GM12878 (cell line): ENCODE measurements at regions of chr17 and their contacts with region 1.

Region 1: DNA sequence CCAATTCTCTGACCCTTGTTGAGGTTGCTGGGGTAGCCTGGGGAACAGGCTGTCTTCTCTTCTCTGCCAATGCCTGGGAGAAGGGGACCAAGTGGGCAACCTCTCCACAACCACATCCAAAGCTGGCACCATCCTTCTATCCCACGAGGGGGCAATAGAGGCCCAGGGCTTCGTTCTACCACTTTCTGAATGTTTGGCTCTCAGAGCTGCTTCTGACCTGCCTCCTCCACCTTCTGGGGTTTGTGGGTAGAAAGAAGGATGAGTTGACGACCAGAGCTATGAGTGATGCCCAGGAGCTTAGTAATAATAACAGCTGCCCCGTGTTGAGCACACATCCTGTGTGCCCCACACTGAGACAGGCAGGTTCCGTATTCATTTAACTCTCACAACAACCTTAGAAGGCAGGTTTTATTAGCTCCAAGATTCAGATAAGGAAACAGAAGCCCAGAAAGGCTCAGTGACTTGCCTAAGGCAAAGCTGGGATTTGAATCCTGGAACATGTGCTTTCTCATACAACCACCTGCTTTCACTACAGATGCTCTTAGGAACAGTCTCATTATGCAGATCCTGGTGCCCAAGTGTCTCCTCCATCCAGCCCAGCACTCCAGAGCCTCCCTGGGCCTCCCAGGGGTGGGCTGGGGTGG is 11.1 kb downstream of the TSPOAP1 start:
- DNase-seq: peak; percentile 66
- ATAC-seq: peak; percentile 95
- H3K4me3 ChIP-seq: no peak overlapping the region
- H3K27ac ChIP-seq: peak overlapping the region; percentile 50
- H3K4me1 ChIP-seq: peaks cover 7% of the 10 kb centered on the region
- H3K27me3 ChIP-seq: no peaks in the 10 kb centered on the region
- CTCF ChIP-seq: peak; percentile 78 to 91 (median 87)
- EP300 ChIP-seq: no peak
- POLR2A ChIP-seq: peak; percentile 22; the same call in 1 of the 2 replicates
- RAD21 ChIP-seq: peak; percentile 93

Region 2: DNA sequence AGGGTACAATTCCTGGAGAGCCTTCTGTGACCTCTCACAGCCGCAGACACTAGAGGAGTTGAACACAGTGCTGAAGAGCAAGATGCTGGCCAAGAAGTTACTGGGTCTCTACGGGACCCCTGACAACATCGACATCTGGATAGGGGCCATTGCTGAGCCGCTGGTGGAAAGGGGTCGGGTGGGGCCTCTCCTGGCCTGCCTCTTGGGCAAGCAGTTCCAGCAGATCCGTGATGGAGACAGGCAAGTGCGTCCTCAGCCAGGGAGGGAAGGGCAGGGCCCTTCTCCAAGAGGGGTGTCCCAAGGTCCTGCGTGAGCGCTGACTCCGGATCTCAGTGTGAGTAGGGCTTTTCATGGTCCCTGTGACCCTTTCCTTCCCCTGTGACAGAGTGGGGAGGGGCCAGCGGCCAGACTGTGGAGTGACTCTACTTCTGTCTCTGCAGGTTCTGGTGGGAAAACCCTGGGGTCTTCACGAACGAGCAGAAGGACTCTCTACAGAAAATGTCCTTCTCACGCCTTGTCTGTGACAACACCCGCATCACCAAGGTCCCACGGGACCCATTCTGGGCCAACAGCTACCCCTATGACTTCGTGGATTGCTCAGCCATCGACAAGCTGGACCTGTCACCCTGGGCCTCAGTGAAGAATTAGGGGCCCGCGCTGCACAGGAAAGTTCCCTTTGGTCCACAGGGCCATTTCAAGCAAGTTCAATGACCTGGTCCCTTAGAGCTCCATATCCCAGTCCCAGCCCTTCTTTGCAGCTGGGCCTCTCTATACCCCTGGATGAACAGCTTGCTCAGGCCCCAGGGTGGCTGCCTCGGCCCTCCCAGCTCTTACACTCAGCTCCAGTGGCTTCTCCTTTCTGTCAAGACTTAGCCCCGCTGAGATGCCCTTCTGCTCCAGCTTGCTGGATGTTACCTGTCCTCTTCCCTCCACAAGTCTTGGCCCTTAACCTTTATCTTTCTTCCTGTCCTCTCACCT is 49.9 kb before region 1 on chr17:
- CTCF ChIA-PET with region 1: no interaction called
- POLR2A ChIA-PET with region 1: no interaction called
- RAD21 ChIA-PET with region 1: no interaction called
- SMC1A ChIA-PET with region 1: no interaction called
- in situ Hi-C with region 1: no loop called
- intact Hi-C with region 1: no loop called
- DNase-seq: no peak
- ATAC-seq: no peak
- H3K4me3 ChIP-seq: no peak overlapping the region
- H3K27ac ChIP-seq: no peak overlapping the region
- H3K4me1 ChIP-seq: no peaks in the 10 kb centered on the region
- H3K27me3 ChIP-seq: peaks cover 2 to 4% of the 10 kb centered on the region in 2 experiments; a peak in 2 of 4 replicates
- CTCF ChIP-seq: no peak
- EP300 ChIP-seq: no peak
- POLR2A ChIP-seq: no peak
- RAD21 ChIP-seq: no peak

Region 3: DNA sequence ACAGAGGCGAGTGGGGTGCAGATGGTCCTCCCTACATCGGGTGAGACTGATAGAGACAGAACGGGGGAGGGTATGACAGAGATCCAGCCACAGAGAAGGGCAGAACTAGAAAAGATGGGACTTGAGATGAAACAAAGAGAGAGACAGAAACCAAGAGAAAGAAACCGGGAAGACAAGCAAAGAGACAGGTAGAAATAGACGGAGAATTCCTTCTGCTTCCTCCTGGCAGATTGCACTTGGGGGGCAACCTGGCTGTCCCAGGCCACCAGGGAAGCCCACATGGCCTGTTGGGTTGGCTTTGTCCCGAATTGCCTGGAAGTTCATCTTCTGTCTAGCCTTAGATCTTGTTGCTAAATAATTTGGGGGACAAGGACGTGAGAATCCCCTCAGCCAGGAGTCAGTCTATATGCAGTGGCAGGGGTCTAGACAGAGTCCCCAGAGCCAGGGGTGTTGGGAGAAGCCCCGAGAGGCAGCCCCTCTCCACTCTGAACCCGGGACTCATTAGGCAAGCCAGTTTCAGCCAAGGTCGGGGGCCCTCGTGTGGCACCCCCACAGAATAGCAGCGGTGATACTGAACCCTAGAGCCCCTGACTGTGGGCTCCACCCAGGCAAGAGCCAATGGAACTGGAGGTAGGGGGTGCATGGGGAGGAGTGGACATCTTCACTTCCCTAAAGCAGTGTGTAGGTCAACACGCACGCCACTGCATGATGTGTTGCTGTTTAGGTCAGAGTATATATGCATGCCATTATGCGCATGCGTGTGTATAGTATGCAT is 11.7 kb after region 1 on chr17:
- CTCF ChIA-PET with region 1: interaction called, 32 read pairs
- POLR2A ChIA-PET with region 1: interaction called, 5 read pairs
- RAD21 ChIA-PET with region 1: interaction called, 16 read pairs
- SMC1A ChIA-PET with region 1: interaction called, 16 read pairs
- in situ Hi-C with region 1: no loop called
- intact Hi-C with region 1: no loop called
- DNase-seq: peak; percentile 97
- ATAC-seq: peak; percentile 51
- H3K4me3 ChIP-seq: peak overlapping the region; percentile 56; the same call in 1 of the 2 replicates
- H3K27ac ChIP-seq: peak overlapping the region; percentile 60
- H3K4me1 ChIP-seq: peaks cover 22% of the 10 kb centered on the region
- H3K27me3 ChIP-seq: no peaks in the 10 kb centered on the region; a peak in 1 of 4 replicates
- CTCF ChIP-seq: peak in 2 of 3 experiments; percentile 75 to 79; a peak in 4 of 6 replicates
- EP300 ChIP-seq: 0 out of 4 replicates have a peak, but pooled peaks of 1 of the 2 experiments have one; percentile 7
- POLR2A ChIP-seq: no peak
- RAD21 ChIP-seq: peak; percentile 44

Region 4: DNA sequence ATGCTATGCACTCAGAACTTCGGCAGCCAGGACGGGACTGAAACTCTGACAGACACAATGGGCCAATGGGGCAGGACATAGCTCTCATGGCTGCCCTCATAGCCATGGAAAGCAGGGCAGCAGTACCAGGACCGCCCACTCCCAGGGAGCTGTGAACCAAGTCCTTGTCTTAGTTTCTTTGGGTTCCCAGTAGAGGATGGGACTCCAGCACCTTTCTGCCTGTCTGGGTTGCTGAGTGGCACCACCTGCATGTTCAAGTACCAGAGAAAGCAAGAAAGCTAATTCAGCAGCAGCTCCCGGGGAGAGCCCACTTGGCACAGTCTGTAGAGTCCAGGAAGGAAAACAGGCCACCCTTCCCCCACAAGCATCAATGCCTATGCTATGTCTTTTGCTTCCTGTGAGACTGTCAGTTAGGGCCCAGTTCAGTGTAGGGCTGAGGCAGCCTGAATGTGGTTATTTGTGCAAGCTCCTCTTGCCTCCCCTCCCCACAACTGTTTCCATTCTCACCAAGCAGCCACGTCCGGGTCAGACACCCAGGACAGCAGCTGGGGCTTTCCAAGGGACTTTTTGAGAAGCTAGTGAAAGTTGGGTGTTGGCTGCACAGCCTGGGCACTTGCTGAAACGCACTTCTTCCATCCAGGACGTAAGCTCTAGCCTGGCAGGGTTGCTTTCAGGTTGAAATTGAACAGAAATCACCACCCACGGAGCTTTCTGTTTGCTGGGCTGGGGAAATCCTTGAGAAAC is 26.7 kb after region 1 on chr17:
- CTCF ChIA-PET with region 1: interaction called, 163 read pairs
- POLR2A ChIA-PET with region 1: interaction called, 77 read pairs
- RAD21 ChIA-PET with region 1: interaction called, 227 read pairs
- SMC1A ChIA-PET with region 1: interaction called, 249 read pairs
- in situ Hi-C with region 1: no loop called
- intact Hi-C with region 1: loop called (anchors 1 kb)
- DNase-seq: peak; percentile 98
- ATAC-seq: peak; percentile 76
- H3K4me3 ChIP-seq: peak overlapping the region; percentile 81
- H3K27ac ChIP-seq: peak overlapping the region; percentile 100
- H3K4me1 ChIP-seq: peaks cover 53% of the 10 kb centered on the region
- H3K27me3 ChIP-seq: no peaks in the 10 kb centered on the region
- CTCF ChIP-seq: no peak
- EP300 ChIP-seq: peak; percentile 85 to 96
- POLR2A ChIP-seq: peak; percentile 79
- RAD21 ChIP-seq: peak; percentile 28; the same call in 1 of the 2 replicates

Region 5: GRCh38 chr17:58427807-58428206 is 110.3 kb after region 1 on chr17:
- CTCF ChIA-PET with region 1: interaction called, 23 read pairs
- POLR2A ChIA-PET with region 1: no interaction called
- RAD21 ChIA-PET with region 1: interaction called, 31 read pairs
- SMC1A ChIA-PET with region 1: interaction called, 21 read pairs
- in situ Hi-C with region 1: no loop called
- intact Hi-C with region 1: no loop called
- DNase-seq: no peak
- ATAC-seq: no peak
- H3K4me3 ChIP-seq: no peak overlapping the region
- H3K27ac ChIP-seq: no peak overlapping the region
- H3K4me1 ChIP-seq: no peaks in the 10 kb centered on the region; the same call in 1 of the 2 replicates
- H3K27me3 ChIP-seq: no peaks in the 10 kb centered on the region
- CTCF ChIP-seq: no peak
- EP300 ChIP-seq: no peak
- POLR2A ChIP-seq: no peak
- RAD21 ChIP-seq: no peak

Region 6: DNA sequence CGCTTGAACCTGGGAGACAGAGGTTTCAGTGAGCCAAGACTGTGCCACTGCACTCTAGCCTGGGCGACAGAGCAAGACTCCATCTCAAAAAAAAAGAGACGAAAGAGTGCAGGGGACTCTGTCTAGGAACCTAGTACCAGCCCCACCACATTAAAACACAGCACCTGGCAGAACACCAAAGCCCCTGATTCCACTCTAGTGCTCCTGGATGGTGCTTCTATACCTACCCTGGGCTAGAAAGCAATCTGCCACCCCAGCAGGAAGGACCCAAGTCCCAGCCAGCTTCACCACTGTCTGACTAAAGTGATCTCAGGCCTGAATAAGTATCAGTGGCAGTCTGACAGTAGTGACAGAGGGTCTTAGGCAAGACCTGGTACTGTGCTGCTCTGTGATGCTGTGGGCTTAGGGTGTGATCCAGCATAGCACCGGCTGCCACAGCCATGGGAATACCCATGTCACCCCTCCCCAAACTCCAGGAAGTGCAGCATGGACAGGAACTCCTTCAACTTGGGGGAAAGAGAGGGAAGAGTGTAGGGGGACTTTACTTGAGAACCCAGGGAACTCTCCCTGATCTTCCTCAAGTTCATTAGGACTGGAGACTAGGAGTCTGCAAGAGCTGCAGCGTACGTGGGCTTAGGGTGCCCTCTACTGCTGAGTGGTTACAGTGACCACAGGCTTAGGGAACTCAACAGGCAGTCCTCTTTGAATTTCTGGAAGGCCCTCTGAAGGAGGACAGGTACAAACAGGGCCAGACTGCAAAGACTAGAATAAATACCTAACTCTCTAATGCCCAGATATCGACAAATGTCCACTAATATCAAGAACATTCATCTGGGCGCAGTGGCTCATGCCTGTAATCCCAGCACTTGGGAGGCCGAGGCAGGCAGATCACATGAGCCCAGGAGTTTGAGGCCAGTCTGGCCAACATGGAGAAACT is 129.8 kb after region 1 on chr17:
- CTCF ChIA-PET with region 1: interaction called, 27 read pairs
- POLR2A ChIA-PET with region 1: interaction called, 5 read pairs
- RAD21 ChIA-PET with region 1: interaction called, 31 read pairs
- SMC1A ChIA-PET with region 1: interaction called, 45 read pairs
- in situ Hi-C with region 1: loop called (anchors 5 kb)
- intact Hi-C with region 1: loop called (anchors 1 kb)
- DNase-seq: peak; percentile 53
- ATAC-seq: peak; percentile 99
- H3K4me3 ChIP-seq: no peak overlapping the region
- H3K27ac ChIP-seq: no peak overlapping the region
- H3K4me1 ChIP-seq: no peaks in the 10 kb centered on the region
- H3K27me3 ChIP-seq: no peaks in the 10 kb centered on the region
- CTCF ChIP-seq: peak; percentile 84 to 93 (median 88); a peak in 5 of 6 replicates
- EP300 ChIP-seq: no peak
- POLR2A ChIP-seq: no peak
- RAD21 ChIP-seq: peak; percentile 99